ENCODE measurements at regions of chr9 and their contacts with region 1.

Region 1: GRCh38 chr9:71819115-71819739 is 50.9 kb upstream of the CEMIP2 start:
- DNase-seq: peak in 8 of 9 experiments; percentile 32 to 71 (median 60)
- ATAC-seq: no peak
- H3K4me3 ChIP-seq: no peak overlapping the region
- H3K4me3 Mint-ChIP-seq: no peak overlapping the region
- H3K27ac ChIP-seq: no peak overlapping the region
- H3K27ac Mint-ChIP-seq: no peak overlapping the region
- H3K4me1 ChIP-seq: peaks cover 12% of the 10 kb centered on the region
- H3K4me1 Mint-ChIP-seq: peaks cover 20% of the 10 kb centered on the region
- H3K27me3 ChIP-seq: no peaks in the 10 kb centered on the region
- H3K27me3 Mint-ChIP-seq: no peaks in the 10 kb centered on the region
- CTCF ChIP-seq: peak; percentile 88

Region 2: DNA sequence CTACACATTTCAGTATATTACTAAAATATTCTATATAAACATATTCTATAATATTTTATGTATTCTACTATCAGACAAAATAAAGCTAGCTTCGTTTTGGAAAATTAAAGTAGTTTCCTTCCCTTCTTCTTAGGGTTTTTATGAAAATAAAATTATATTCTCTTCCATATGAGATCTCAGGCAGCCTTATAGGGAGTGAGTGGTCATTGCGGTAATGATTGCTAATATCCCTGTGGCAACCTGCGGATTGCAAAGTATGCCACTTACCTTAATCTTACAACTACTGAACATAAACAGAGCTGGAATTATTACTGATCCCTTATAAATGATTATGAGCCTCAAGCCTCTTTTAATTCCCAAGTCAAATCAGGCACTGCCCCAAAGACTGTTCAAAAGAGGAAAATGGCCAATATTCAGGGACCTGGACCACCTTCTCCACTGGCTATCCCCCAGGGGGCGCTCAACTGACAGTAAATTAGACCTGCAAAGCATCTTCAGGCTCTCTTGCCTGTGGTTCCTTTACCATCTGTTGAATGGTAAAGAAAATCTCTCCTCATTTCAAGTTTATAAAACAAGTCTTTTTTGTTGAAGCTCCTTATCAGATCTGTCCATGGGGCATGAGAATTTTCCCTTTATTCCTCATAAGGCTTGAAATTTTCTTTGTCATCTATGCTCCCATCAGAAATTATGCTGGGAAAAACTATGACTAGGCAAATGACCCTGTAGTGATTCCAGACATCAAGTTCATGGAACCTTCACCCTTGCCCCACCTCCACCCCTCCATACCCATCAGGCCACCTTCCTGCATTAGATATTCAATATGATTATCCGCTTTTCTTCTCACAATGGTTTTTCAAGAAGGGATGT is 214.8 kb before region 1 on chr9:
- CTCF ChIA-PET with region 1: interaction called, 51 read pairs
- POLR2A ChIA-PET with region 1: interaction called, 3 read pairs
- intact Hi-C with region 1: loop called (anchors 1 kb)
- DNase-seq: peak; percentile 57 to 88 (median 79)
- ATAC-seq: peak; percentile 66
- H3K4me3 ChIP-seq: no peak overlapping the region
- H3K4me3 Mint-ChIP-seq: no peak overlapping the region
- H3K27ac ChIP-seq: no peak overlapping the region
- H3K27ac Mint-ChIP-seq: no peak overlapping the region
- H3K4me1 ChIP-seq: no peaks in the 10 kb centered on the region
- H3K4me1 Mint-ChIP-seq: no peaks in the 10 kb centered on the region
- H3K27me3 ChIP-seq: no peaks in the 10 kb centered on the region
- H3K27me3 Mint-ChIP-seq: no peaks in the 10 kb centered on the region
- CTCF ChIP-seq: peak; percentile 81

Region 3: DNA sequence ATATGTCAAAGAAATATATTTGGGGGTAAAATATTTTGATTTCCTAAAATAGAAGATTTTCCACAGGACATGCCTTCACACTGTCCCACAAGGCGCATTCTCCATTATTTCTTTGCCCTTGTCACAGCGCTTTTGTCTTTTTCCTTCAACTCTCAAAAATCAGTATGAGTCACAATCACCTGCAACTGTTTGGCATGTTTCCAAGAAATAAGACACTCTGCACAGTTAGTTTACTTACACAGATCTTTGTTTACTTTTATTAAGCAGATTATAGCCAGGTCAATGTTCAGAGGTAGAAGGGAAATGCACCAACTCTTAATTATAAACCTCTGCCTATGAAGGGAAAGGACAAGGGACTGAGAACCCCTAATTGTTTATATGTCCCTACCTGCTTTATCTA is 60.4 kb before region 1 on chr9:
- CTCF ChIA-PET with region 1: interaction called, 88 read pairs
- POLR2A ChIA-PET with region 1: no interaction called
- intact Hi-C with region 1: loop called in 1 of 2 experiments (anchors 2 kb)
- DNase-seq: peak in 1 of 9 experiments; percentile 44
- ATAC-seq: peak; percentile 18
- H3K4me3 ChIP-seq: no peak overlapping the region
- H3K4me3 Mint-ChIP-seq: no peak overlapping the region
- H3K27ac ChIP-seq: no peak overlapping the region
- H3K27ac Mint-ChIP-seq: no peak overlapping the region
- H3K4me1 ChIP-seq: peaks cover 55% of the 10 kb centered on the region
- H3K4me1 Mint-ChIP-seq: peaks cover 85% of the 10 kb centered on the region
- H3K27me3 ChIP-seq: no peaks in the 10 kb centered on the region
- H3K27me3 Mint-ChIP-seq: no peaks in the 10 kb centered on the region
- CTCF ChIP-seq: no peak

Region 4: DNA sequence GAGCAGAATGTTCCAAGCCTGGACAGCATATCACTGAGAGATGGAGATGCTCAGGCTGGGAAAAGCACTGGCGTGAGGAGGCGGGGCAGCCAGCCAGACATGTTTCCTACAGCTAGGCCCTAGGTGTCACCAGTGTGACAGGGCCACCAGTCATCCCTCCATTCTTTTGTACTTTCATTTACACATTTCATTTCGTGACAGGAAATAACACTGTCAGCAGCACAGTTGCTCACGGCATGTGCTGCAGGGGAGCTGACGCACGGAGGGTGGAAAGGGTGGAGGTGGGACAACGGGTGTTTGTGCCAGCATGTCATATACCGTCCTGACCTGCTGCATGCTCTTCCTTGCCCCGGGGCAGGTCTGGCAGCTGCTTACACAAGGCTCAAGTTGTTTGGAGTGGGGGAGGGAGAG is 36.1 kb before region 1 on chr9:
- CTCF ChIA-PET with region 1: interaction called, 49 read pairs
- POLR2A ChIA-PET with region 1: interaction called, 6 read pairs
- intact Hi-C with region 1: loop called (anchors 1 kb)
- DNase-seq: peak; percentile 76 to 98 (median 85)
- ATAC-seq: peak; percentile 94
- H3K4me3 ChIP-seq: peak overlapping the region; percentile 4 to 10
- H3K4me3 Mint-ChIP-seq: peak overlapping the region; percentile 55
- H3K27ac ChIP-seq: peak overlapping the region; percentile 77 to 90
- H3K27ac Mint-ChIP-seq: peak overlapping the region; percentile 97
- H3K4me1 ChIP-seq: peaks cover 40% of the 10 kb centered on the region
- H3K4me1 Mint-ChIP-seq: peaks cover 47% of the 10 kb centered on the region
- H3K27me3 ChIP-seq: no peaks in the 10 kb centered on the region
- H3K27me3 Mint-ChIP-seq: no peaks in the 10 kb centered on the region
- CTCF ChIP-seq: peak; percentile 51

Region 5: GRCh38 chr9:71806901-71807307 is 12.3 kb before region 1 on chr9:
- CTCF ChIA-PET with region 1: interaction called, 149 read pairs
- POLR2A ChIA-PET with region 1: interaction called, 3 read pairs
- intact Hi-C with region 1: loop called in 1 of 2 experiments (anchors 1 kb)
- DNase-seq: peak; percentile 12 to 80 (median 62)
- ATAC-seq: peak; percentile 96
- H3K4me3 ChIP-seq: no peak overlapping the region
- H3K4me3 Mint-ChIP-seq: no peak overlapping the region
- H3K27ac ChIP-seq: no peak overlapping the region
- H3K27ac Mint-ChIP-seq: peak overlapping the region; percentile 27
- H3K4me1 ChIP-seq: peaks cover 6% of the 10 kb centered on the region
- H3K4me1 Mint-ChIP-seq: peaks cover 15% of the 10 kb centered on the region
- H3K27me3 ChIP-seq: no peaks in the 10 kb centered on the region
- H3K27me3 Mint-ChIP-seq: no peaks in the 10 kb centered on the region
- CTCF ChIP-seq: peak; percentile 91

Region 6: DNA sequence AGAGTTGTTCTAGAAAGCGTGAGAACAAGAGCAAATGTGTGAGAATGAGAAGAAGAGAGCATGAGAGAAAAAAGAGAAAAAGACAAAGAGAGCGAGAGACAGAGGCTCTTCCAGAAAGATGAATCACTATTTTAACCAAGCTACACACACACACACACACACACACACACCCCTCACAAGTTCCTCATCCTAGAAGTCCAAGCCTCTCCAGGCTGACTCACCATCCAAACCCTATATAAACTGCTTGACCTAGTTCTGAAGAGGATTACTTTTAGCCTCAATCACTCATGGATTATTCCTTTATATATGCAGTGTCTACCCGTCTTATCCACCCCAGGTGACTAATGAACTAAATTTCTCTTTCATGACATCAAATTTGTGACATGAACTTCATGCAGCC is 203.6 kb after region 1 on chr9:
- CTCF ChIA-PET with region 1: interaction called, 11 read pairs
- POLR2A ChIA-PET with region 1: no interaction called
- intact Hi-C with region 1: no loop called
- DNase-seq: no peak
- ATAC-seq: no peak
- H3K4me3 ChIP-seq: no peak overlapping the region
- H3K4me3 Mint-ChIP-seq: no peak overlapping the region
- H3K27ac ChIP-seq: no peak overlapping the region
- H3K27ac Mint-ChIP-seq: no peak overlapping the region
- H3K4me1 ChIP-seq: no peaks in the 10 kb centered on the region
- H3K4me1 Mint-ChIP-seq: peaks cover 3% of the 10 kb centered on the region
- H3K27me3 ChIP-seq: no peaks in the 10 kb centered on the region
- H3K27me3 Mint-ChIP-seq: no peaks in the 10 kb centered on the region
- CTCF ChIP-seq: no peak

Measured in CD8-positive, alpha-beta T cell (primary cell).